ENCODE measurements at regions of chr2 and their contacts with region 1.

Region 1: GRCh38 chr2:27370026-27370815 is at the starts of genes EIF2B4 and SNX17:
- DNase-seq: peak; percentile 98 to 100 (median 99)
- H3K4me3 ChIP-seq: peak within 1 kb of the TSS; percentile 92
- H3K4me3 Mint-ChIP-seq: peak within 1 kb of the TSS; percentile 89 to 99 (median 97)
- H3K27ac ChIP-seq: peak within 1 kb of the TSS; percentile 87
- H3K27ac Mint-ChIP-seq: peak within 1 kb of the TSS; percentile 82 to 100 (median 98)
- H3K4me1 ChIP-seq: peaks cover 35% of the 10 kb centered on the region
- H3K4me1 Mint-ChIP-seq: peaks cover 42 to 50% (median 44%) of the 10 kb centered on the region in 3 donors
- H3K27me3 ChIP-seq: no peaks in the 10 kb centered on the region
- H3K27me3 Mint-ChIP-seq: peaks cover 0 to 2% of the 10 kb centered on the region in 2 donors
- total RNA-seq, gene EIF2B4: 46.6 to 47.1 TPM
- total RNA-seq, gene SNX17: 122 to 130 TPM

Region 2: GRCh38 chr2:27356382-27357181 is 13.6 kb before region 1 on chr2 and contains the start of gene GTF3C2:
- CTCF ChIA-PET with region 1: interaction called, 7 read pairs
- POLR2A ChIA-PET with region 1: interaction called, 12 read pairs
- DNase-seq: peak; percentile 86 to 96 (median 93)
- H3K4me3 ChIP-seq: peak within 1 kb of the TSS; percentile 92
- H3K4me3 Mint-ChIP-seq: peak within 1 kb of the TSS; percentile 93 to 100 (median 99)
- H3K27ac ChIP-seq: peak within 1 kb of the TSS; percentile 90
- H3K27ac Mint-ChIP-seq: peak within 1 kb of the TSS; percentile 98 to 100 (median 99)
- H3K4me1 ChIP-seq: peaks cover 32% of the 10 kb centered on the region
- H3K4me1 Mint-ChIP-seq: peaks cover 44 to 64% (median 58%) of the 10 kb centered on the region in 3 donors
- H3K27me3 ChIP-seq: no peaks in the 10 kb centered on the region
- H3K27me3 Mint-ChIP-seq: peaks cover 0 to 1% of the 10 kb centered on the region in 2 donors
- total RNA-seq, gene GTF3C2: 76.7 to 81.7 TPM

Region 3: DNA sequence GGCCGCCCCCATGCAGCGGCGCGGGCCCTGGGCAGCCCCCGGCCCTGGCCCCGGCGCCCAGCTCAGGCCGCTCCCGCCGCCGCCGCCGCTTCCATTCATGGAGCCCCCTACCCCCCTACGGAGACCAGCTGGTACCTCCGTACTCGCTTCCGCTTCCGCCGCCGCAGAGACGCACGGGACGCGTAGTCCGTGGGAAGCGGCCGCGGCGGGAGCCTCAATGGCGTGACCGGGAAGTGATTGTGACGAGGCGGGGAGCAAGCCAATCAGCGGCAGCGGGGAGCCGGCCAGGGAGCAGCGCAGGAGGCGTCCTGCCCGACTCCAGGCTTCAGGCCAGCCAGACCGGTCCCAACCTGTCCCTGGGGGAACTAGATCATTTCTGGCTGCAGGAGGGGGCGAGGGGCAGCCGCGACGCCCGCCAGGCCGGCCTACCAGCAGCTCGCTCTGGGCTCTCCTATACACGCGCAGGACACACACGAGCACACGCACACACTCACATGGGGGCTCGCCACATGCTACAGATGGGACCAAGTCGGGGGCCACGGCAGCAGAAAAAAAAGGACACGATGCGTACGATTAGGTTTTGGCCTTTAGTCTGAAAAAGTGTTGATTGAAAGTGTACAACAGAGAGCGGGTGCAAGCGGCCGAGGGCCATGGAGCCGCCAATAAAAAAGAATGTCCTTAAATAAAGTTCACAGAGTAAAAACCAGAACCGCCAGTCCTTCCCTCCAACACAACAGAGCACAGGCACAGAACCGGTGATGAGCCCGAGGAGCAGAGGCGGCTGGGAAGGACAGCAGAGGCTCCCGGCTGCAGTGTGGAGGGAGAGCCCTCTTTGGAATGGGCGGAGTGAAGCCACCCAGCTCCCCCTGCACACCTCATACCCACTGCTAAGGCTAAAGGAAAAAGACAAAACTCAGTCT is 10.7 kb after region 1 on chr2 and contains the start of gene ZNF513:
- CTCF ChIA-PET with region 1: interaction called, 21 read pairs
- POLR2A ChIA-PET with region 1: interaction called, 18 read pairs
- DNase-seq: peak; percentile 78 to 87 (median 84)
- H3K4me3 ChIP-seq: peak within 1 kb of the TSS; percentile 78
- H3K4me3 Mint-ChIP-seq: peak within 1 kb of the TSS; percentile 87 to 95 (median 90)
- H3K27ac ChIP-seq: peak within 1 kb of the TSS; percentile 83
- H3K27ac Mint-ChIP-seq: peak within 1 kb of the TSS; percentile 92 to 97 (median 96)
- H3K4me1 ChIP-seq: peaks cover 20% of the 10 kb centered on the region
- H3K4me1 Mint-ChIP-seq: peaks cover 23 to 36% (median 28%) of the 10 kb centered on the region in 3 donors
- H3K27me3 ChIP-seq: no peaks in the 10 kb centered on the region
- H3K27me3 Mint-ChIP-seq: no peaks in the 10 kb centered on the region
- total RNA-seq, gene ZNF513: 9.2 to 9.9 TPM

Region 4: DNA sequence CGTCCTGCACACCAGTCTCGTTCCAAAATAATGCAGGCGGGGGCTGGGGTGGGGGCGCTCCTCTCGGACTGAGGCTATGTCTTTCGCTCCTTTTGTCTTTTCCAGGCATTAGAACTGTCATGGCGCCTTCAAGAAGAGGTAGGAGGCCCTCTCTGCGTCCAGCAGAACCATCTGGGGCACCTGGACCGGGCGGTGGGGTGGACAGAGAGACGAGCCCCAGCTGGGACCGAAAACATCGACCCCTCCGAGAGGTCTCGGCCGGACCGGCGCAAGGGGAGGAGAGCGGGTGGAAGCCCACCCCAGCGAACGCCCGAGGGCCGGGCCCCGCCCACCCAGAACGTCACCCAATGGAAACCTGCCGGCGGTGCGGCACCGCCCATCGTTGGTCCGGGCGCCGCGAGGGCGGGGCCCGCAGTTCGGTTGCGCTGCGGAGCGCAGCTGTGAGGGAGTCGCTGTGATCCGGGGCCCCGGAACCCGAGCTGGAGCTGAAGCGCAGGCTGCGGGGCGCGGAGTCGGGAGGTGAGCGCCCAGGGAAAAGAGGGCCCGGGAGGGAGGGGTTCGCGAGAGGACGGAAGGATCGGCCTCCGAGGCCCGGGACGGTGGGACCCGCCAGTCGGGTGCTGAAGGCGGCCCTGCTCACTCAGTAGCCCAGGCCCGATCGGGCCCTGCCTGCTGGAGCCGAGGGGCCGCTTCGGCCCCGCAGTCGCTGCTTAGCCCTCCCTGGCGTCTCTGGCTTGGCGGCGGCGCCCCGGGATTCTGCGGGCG is 58.2 kb after region 1 on chr2 and contains the start of gene NRBP1:
- CTCF ChIA-PET with region 1: interaction called, 11 read pairs
- POLR2A ChIA-PET with region 1: interaction called, 3 read pairs
- DNase-seq: peak; percentile 83 to 92 (median 90)
- H3K4me3 ChIP-seq: peak within 1 kb of the TSS; percentile 90
- H3K4me3 Mint-ChIP-seq: peak within 1 kb of the TSS; percentile 98 to 99 (median 98)
- H3K27ac ChIP-seq: peak within 1 kb of the TSS; percentile 90
- H3K27ac Mint-ChIP-seq: peak within 1 kb of the TSS; percentile 96 to 99 (median 97)
- H3K4me1 ChIP-seq: peaks cover 29% of the 10 kb centered on the region
- H3K4me1 Mint-ChIP-seq: peaks cover 36 to 48% (median 45%) of the 10 kb centered on the region in 3 donors
- H3K27me3 ChIP-seq: no peaks in the 10 kb centered on the region
- H3K27me3 Mint-ChIP-seq: no peaks in the 10 kb centered on the region
- total RNA-seq, gene NRBP1: 77.2 to 81.0 TPM

Region 5: GRCh38 chr2:27471961-27472360 is 101.7 kb after region 1 on chr2:
- CTCF ChIA-PET with region 1: no interaction called
- POLR2A ChIA-PET with region 1: no interaction called
- DNase-seq: no peak
- H3K4me3 ChIP-seq: no peak overlapping the region
- H3K4me3 Mint-ChIP-seq: no peak overlapping the region
- H3K27ac ChIP-seq: no peak overlapping the region
- H3K27ac Mint-ChIP-seq: peak overlapping the region in 1 of 8 donors; percentile 31
- H3K4me1 ChIP-seq: no peaks in the 10 kb centered on the region
- H3K4me1 Mint-ChIP-seq: no peaks in the 10 kb centered on the region
- H3K27me3 ChIP-seq: no peaks in the 10 kb centered on the region
- H3K27me3 Mint-ChIP-seq: no peaks in the 10 kb centered on the region

Region 6: DNA sequence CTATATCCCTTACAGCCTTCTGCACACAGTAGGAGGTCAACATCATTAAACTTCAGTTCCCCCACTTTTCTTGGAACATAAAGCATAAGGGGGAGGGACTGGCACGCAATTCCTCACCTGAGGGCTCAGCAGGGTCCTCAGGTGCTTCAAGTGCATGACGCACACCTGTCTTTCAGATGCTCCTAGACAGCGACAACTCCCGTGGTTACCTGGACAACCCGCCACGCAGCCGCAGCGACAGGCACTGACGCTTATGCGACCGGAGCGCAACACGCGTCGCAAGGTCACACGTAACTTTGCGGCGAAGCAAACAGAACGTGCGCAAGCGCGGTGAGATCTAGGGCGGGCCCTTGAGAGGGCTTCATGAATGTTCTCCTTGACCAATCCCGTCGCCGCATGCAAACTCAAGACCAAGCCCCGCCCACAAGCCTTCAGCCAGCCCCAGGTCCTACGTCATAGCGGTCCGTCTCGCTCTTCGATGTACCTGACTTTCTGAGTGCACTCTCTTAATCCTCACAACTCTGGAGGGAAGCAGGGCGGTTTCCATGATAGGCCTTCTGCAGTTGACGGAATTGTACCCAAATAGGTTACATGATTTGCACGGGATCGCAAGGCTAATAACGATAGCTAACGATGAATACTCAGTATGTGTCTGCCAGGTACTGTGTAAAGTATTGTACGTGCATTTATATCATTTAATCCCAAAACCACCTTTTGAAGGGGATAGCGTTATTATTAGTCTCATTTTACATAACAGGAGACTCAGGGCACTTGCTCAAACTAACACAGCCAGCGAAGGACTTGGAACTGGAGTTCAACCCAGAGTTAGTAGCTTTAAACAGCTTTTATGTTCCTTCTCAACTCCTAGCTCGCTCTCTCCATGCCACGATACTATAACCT is 119.5 kb after region 1 on chr2 and contains the start of gene IFT172:
- CTCF ChIA-PET with region 1: no interaction called
- POLR2A ChIA-PET with region 1: no interaction called
- DNase-seq: peak; percentile 99 to 100 (median 99)
- H3K4me3 ChIP-seq: peak within 1 kb of the TSS; percentile 79
- H3K4me3 Mint-ChIP-seq: peak within 1 kb of the TSS; percentile 72 to 92 (median 88)
- H3K27ac ChIP-seq: peak within 1 kb of the TSS; percentile 92
- H3K27ac Mint-ChIP-seq: peak within 1 kb of the TSS; percentile 92 to 100 (median 99)
- H3K4me1 ChIP-seq: peaks cover 14% of the 10 kb centered on the region
- H3K4me1 Mint-ChIP-seq: peaks cover 13 to 32% (median 15%) of the 10 kb centered on the region in 3 donors
- H3K27me3 ChIP-seq: peaks cover 9% of the 10 kb centered on the region
- H3K27me3 Mint-ChIP-seq: peaks cover 14 to 17% of the 10 kb centered on the region in 2 donors
- total RNA-seq, gene IFT172: 12.0 to 13.8 TPM